Activated B cell treated with CpG ODN at 0.5 μM for 24 hours (primary cell): ENCODE measurements at regions of chr1 and their contacts with region 1.

Region 1: GRCh38 chr1:160997323-160998038 is 23.5 kb downstream of the F11R start:
- DNase-seq: peak; percentile 29
- ATAC-seq: peak; percentile 81
- H3K4me3 Mint-ChIP-seq: no peak overlapping the region
- H3K27ac Mint-ChIP-seq: peak overlapping the region; percentile 42
- H3K4me1 Mint-ChIP-seq: peaks cover 3% of the 10 kb centered on the region
- H3K27me3 Mint-ChIP-seq: no peaks in the 10 kb centered on the region
- CTCF ChIP-seq: no peak

Region 2: DNA sequence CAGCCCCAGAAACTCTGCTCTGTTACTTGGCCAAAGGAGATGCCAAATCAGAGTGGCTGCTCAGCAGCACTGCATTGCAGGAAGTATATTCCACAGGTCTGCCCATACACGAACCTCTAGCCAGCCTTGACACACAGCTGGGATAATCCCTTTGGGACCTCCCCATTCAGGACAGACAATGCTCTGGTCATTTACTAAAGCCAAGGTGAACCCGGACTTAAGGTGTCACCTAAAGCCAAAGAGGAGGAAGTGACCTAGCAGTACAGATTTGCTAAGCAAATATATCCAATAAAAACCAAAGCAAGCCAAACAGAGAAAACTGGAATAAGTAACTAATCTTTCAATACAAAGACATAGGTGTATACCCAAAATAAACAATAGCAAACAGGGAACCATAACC is 682.1 kb before region 1 on chr1:
- CTCF ChIA-PET with region 1: no interaction called
- POLR2A ChIA-PET with region 1: no interaction called
- intact Hi-C with region 1: no loop called
- DNase-seq: no peak
- ATAC-seq: no peak
- H3K4me3 Mint-ChIP-seq: no peak overlapping the region
- H3K27ac Mint-ChIP-seq: no peak overlapping the region
- H3K4me1 Mint-ChIP-seq: peaks cover 2% of the 10 kb centered on the region
- H3K27me3 Mint-ChIP-seq: no peaks in the 10 kb centered on the region
- CTCF ChIP-seq: no peak

Region 3: DNA sequence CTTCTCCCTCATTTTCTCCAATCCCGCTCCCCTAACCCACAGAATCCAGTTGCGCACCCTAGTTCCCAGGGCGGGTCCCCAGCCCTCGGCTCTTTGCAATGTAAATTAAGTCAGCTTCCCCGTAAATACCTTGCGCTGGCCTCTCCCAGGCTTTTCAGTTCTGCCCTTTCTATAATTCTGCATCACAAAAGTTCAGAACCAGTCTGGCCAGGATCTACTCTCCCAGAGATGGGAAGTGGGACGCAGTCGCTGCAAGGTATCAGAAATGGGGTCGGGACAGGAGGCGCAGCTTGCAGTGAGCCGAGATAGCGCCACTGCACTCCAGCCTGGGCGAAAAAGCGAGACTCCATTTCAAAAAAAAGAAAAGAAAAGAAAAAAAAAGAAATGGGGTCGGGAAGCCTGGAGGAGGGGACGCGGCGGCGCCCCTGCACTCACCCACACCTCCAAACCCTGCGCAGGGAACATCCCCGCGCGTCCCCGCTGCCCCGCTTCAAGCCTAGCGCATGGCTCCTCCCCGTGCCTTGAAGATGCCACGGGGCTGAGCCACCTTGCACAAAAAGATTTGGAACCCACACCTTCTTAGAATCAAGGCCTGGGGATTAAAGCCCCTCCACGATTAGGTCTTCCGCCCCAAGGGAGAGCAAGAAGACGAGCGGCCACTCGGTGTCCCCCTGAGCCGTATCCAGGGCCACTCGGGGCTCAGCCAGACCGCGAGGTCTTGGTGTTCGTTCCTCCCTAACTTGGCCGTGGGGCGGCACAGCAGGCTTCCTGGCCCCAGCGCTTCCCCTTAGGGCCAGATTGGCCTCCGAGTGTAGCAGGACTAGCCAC is 15.7 kb before region 1 on chr1:
- CTCF ChIA-PET with region 1: no interaction called
- POLR2A ChIA-PET with region 1: interaction called, 11 read pairs
- intact Hi-C with region 1: no loop called
- DNase-seq: peak; percentile 21
- ATAC-seq: peak; percentile 65
- H3K4me3 Mint-ChIP-seq: peak overlapping the region; percentile 55
- H3K27ac Mint-ChIP-seq: no peak overlapping the region
- H3K4me1 Mint-ChIP-seq: peaks cover 12% of the 10 kb centered on the region
- H3K27me3 Mint-ChIP-seq: peaks cover 19% of the 10 kb centered on the region
- CTCF ChIP-seq: no peak

Region 4: GRCh38 chr1:161021165-161021960 is 23.9 kb after region 1 on chr1:
- CTCF ChIA-PET with region 1: interaction called, 17 read pairs
- POLR2A ChIA-PET with region 1: interaction called, 10 read pairs
- intact Hi-C with region 1: no loop called
- DNase-seq: peak; percentile 74
- ATAC-seq: peak; percentile 92
- H3K4me3 Mint-ChIP-seq: peak overlapping the region; percentile 95
- H3K27ac Mint-ChIP-seq: peak overlapping the region; percentile 91
- H3K4me1 Mint-ChIP-seq: peaks cover 27% of the 10 kb centered on the region
- H3K27me3 Mint-ChIP-seq: no peaks in the 10 kb centered on the region
- CTCF ChIP-seq: no peak

Region 5: DNA sequence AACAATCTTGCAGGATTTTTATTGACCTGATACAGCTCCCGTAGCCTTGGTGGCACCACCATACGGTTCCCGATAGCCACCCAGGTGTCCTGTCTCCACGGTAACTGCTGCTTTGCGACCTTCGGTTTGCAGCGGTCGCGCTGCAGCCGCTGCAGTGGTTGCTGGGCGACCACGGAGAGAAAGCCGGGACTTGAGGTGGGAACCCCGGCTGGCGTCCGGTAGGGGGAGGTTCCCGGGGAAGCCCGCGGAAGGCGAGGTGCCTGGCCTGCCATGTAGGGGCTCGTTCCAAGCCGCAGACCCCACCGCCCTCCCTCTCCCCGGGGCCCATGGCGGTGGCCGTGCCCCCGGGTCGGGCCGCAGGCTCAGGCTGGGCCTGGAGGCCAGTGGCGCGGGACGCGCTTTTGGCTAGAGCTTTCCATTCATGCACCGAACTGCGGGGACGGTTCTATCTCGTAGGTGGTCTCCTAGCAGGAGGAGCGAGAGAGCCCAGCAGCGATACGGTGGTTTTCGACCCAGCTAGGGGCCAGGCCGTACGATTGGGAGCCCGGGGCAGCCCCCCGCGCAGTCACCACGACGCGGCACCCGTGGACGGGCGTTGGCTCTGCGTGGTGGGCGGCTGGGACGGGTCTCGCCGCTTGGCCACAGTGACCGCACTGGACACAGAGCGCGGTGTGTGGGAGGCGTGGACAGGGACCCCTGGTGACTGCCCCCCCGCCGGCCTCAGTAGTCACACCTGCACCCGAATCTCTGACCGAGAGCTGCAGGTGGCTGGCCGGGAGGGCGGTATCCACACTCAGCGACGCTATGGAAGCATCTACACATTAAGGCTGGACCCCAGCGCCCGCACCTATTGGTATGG is 101.0 kb after region 1 on chr1 and contains the start of gene KLHDC9:
- CTCF ChIA-PET with region 1: interaction called, 79 read pairs
- POLR2A ChIA-PET with region 1: interaction called, 15 read pairs
- intact Hi-C with region 1: loop called (anchors 1 kb)
- DNase-seq: peak; percentile 77
- ATAC-seq: peak; percentile 79
- H3K4me3 Mint-ChIP-seq: peak within 1 kb of the TSS; percentile 88
- H3K27ac Mint-ChIP-seq: peak within 1 kb of the TSS; percentile 93
- H3K4me1 Mint-ChIP-seq: peaks cover 36% of the 10 kb centered on the region
- H3K27me3 Mint-ChIP-seq: no peaks in the 10 kb centered on the region
- CTCF ChIP-seq: peak; percentile 11
- total RNA-seq, gene KLHDC9: 2.9 and 3.6 TPM in 2 replicates

Region 6: DNA sequence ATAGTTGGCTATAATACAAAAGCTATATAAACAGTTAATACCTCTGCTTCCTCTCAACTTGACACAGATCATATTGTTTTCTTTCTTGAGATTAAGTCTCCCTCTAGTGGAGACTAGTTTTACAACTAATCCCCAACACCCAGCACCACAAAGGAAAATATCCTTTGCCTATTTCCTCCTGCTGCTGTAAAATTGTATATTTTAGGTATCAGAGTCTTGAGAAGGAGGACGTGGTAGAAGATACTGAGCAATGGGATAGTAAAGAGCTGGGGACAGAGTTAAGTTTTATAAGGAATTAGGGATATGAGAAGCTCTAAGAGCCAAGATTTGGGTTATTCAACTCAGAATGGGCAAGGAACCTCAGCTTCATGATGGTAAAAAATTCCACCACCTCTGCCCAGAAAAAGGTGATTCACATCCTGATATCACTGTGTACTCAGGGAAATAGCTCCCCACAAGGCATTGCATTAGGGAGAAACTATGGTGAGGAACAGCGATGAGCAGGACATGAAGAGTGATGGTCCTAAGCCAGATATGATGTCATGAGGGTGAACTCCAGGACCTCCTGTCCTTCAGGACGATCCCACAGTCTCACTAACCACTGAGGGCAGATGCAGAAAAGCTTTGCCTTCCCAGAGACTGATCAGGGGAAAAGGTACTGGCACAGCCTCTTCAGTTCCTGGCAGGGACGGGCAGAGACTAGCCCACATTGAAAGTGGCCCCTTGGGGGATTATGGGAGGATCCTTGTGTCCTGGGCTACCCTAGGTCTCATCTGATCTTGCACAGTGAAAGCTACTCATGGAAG is 384.9 kb after region 1 on chr1:
- CTCF ChIA-PET with region 1: interaction called, 5 read pairs
- POLR2A ChIA-PET with region 1: no interaction called
- intact Hi-C with region 1: loop called (anchors 5 kb)
- DNase-seq: no peak
- ATAC-seq: peak; percentile 90
- H3K4me3 Mint-ChIP-seq: no peak overlapping the region
- H3K27ac Mint-ChIP-seq: no peak overlapping the region
- H3K4me1 Mint-ChIP-seq: peaks cover 7% of the 10 kb centered on the region
- H3K27me3 Mint-ChIP-seq: no peaks in the 10 kb centered on the region
- CTCF ChIP-seq: no peak

Region 7: DNA sequence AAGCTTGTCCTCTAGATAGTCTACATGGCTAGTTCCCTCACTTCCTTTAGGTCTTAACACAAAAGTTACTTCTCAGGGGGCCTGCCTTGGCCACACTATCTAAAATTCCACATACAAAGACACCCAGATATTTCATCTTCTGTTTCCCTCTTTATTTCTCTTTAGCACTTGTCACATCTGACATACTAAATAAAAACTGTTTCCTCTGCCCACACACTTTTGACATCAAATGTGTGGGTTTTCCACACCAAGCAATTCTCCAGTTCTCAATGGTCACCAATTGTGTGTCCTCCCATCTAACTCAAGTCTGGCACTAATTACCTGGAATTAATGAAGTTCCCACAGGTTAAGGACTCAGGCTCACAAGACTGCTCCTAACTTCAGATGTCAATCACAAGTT is 395.7 kb after region 1 on chr1:
- CTCF ChIA-PET with region 1: no interaction called
- POLR2A ChIA-PET with region 1: no interaction called
- intact Hi-C with region 1: no loop called
- DNase-seq: no peak
- ATAC-seq: no peak
- H3K4me3 Mint-ChIP-seq: no peak overlapping the region
- H3K27ac Mint-ChIP-seq: no peak overlapping the region
- H3K4me1 Mint-ChIP-seq: peaks cover 14% of the 10 kb centered on the region
- H3K27me3 Mint-ChIP-seq: no peaks in the 10 kb centered on the region
- CTCF ChIP-seq: no peak